Transverse colon (tissue), 4 donors: ENCODE measurements at regions of chr7 and their contacts with region 1.

Region 1: GRCh38 chr7:100132697-100133151 is 6.0 kb downstream of the MBLAC1 start:
- DNase-seq: peak; percentile 76
- H3K4me3 ChIP-seq: no peak overlapping the region
- H3K27ac ChIP-seq: no peak overlapping the region
- H3K4me1 ChIP-seq: peaks cover 6 to 37% (median 20%) of the 10 kb centered on the region in 4 donors
- H3K27me3 ChIP-seq: no peaks in the 10 kb centered on the region
- CTCF ChIP-seq: peak; percentile 75 to 96 (median 82)
- EP300 ChIP-seq: no peak
- POLR2A ChIP-seq: no peak

Region 2: GRCh38 chr7:99822731-99823718 is 309.7 kb before region 1 on chr7:
- in situ Hi-C with region 1: no loop called
- intact Hi-C with region 1: no loop called
- DNase-seq: peak; percentile 57
- H3K4me3 ChIP-seq: no peak overlapping the region
- H3K27ac ChIP-seq: no peak overlapping the region
- H3K4me1 ChIP-seq: peaks cover 0 to 13% (median 5%) of the 10 kb centered on the region in 4 donors
- H3K27me3 ChIP-seq: no peaks in the 10 kb centered on the region
- CTCF ChIP-seq: no peak
- EP300 ChIP-seq: no peak
- POLR2A ChIP-seq: no peak

Region 3: GRCh38 chr7:100101016-100101862 is 31.5 kb before region 1 on chr7 and contains the starts of genes AP4M1 and MCM7:
- in situ Hi-C with region 1: no loop called
- intact Hi-C with region 1: no loop called
- DNase-seq: peak; percentile 99
- H3K4me3 ChIP-seq: peak within 1 kb of the TSS; percentile 72 to 91 (median 81)
- H3K27ac ChIP-seq: peak within 1 kb of the TSS; percentile 92 to 100 (median 97)
- H3K4me1 ChIP-seq: peaks cover 9 to 25% (median 17%) of the 10 kb centered on the region in 4 donors
- H3K27me3 ChIP-seq: no peaks in the 10 kb centered on the region
- CTCF ChIP-seq: no peak
- EP300 ChIP-seq: no peak
- POLR2A ChIP-seq: no peak
- total RNA-seq, gene AP4M1: 16.5 to 86.0 (median 54.9) TPM
- total RNA-seq, gene MCM7: 30.3 to 72.6 (median 38.7) TPM

Region 4: GRCh38 chr7:100215895-100216294 is 83.2 kb after region 1 on chr7:
- in situ Hi-C with region 1: loop called in 1 of 4 experiments (anchors 5 kb)
- intact Hi-C with region 1: loop called (anchors 5 kb)
- DNase-seq: no peak
- H3K4me3 ChIP-seq: no peak overlapping the region
- H3K27ac ChIP-seq: peak overlapping the region in 1 of 4 donors; percentile 8
- H3K4me1 ChIP-seq: peaks cover 0 to 31% (median 2%) of the 10 kb centered on the region in 4 donors
- H3K27me3 ChIP-seq: no peaks in the 10 kb centered on the region
- CTCF ChIP-seq: no peak
- EP300 ChIP-seq: no peak
- POLR2A ChIP-seq: no peak

Region 5: GRCh38 chr7:100221231-100221718 is 88.6 kb after region 1 on chr7:
- in situ Hi-C with region 1: loop called in 1 of 4 experiments (anchors 5 kb)
- intact Hi-C with region 1: loop called (anchors 5 kb)
- DNase-seq: peak; percentile 68
- H3K4me3 ChIP-seq: peak overlapping the region in 1 of 4 donors; percentile 35
- H3K27ac ChIP-seq: peak overlapping the region; percentile 60 to 77 (median 70)
- H3K4me1 ChIP-seq: peaks cover 0 to 6% (median 0%) of the 10 kb centered on the region in 4 donors
- H3K27me3 ChIP-seq: no peaks in the 10 kb centered on the region
- CTCF ChIP-seq: no peak
- EP300 ChIP-seq: no peak
- POLR2A ChIP-seq: peak; percentile 48

Region 6: DNA sequence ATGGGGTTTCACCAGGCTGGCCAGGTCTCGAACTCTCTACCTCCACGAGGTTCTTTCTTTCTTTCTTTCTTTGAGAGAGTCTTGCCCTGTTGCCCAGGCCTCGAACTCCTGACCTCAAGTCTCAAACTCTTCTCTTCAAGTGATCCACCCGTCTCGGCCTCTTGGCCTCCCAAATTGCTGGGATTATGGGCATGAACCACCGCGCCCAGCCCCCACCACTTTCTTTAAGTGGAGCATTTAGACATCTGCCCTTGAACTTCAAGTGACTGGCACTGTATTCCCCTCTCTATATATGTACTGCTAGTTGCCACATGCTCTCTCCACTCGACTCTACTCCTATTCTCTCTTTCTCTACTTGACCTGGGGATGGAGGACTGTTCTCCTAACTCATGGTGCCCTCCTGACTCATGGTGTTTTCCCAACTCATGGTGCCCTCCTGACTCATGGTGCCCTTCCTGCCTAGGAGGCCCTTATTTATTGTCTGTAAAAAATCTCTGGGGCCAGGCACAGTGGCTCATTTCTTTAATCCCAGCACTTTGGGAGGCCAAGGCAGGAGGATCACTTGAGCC is 782.2 kb after region 1 on chr7:
- in situ Hi-C with region 1: no loop called
- intact Hi-C with region 1: no loop called
- DNase-seq: no peak
- H3K4me3 ChIP-seq: no peak overlapping the region
- H3K27ac ChIP-seq: no peak overlapping the region
- H3K4me1 ChIP-seq: peaks cover 0 to 19% (median 8%) of the 10 kb centered on the region in 4 donors
- H3K27me3 ChIP-seq: peaks cover 4% of the 10 kb centered on the region
- CTCF ChIP-seq: no peak
- EP300 ChIP-seq: no peak
- POLR2A ChIP-seq: no peak